ENCODE measurements at regions of chr9 and their contacts with region 1.

Region 1: GRCh38 chr9:100992632-100993031 is 35.9 kb upstream of the PLPPR1 start:
- DNase-seq: no peak
- ATAC-seq: no peak

Region 2: DNA sequence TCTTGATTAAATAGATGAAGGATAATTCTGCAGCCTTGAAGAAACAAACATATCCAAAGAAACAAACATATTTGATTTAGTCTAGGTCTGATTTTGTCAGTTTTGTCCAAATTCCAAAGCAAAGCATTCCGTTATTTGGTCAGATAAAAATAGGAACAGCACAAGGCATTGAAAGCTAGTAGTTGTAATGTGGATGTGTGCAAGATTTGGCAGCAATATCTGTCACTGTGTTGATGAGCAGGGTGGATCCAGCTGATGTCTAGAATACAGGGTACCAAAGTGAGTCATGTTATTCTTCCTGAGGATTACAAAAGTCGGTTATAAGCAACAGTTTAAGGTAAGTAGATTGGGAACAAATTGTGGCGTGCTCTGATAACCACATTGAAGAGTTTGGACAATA is 33.4 kb before region 1 on chr9:
- intact Hi-C with region 1: loop called (anchors 2 kb)
- DNase-seq: no peak
- ATAC-seq: no peak

Measured in sciatic nerve (tissue), 2 donors.